Activated CD4-positive, alpha-beta T cell treated with anti-CD3 and anti-CD28 coated beads, Interleukin-2, amount 10 ng/mL, durations not matched to agents 24 days and 14 days (primary cell): ENCODE measurements at regions of chr18 and their contacts with region 1.

Region 1: GRCh38 chr18:9334329-9334972 is at the start of gene TWSG1:
- DNase-seq: peak; percentile 97
- H3K4me3 Mint-ChIP-seq: peak within 1 kb of the TSS; percentile 83
- H3K27ac Mint-ChIP-seq: peak within 1 kb of the TSS; percentile 74
- H3K4me1 Mint-ChIP-seq: peaks cover 25% of the 10 kb centered on the region
- H3K27me3 Mint-ChIP-seq: peaks cover 29% of the 10 kb centered on the region
- total RNA-seq, gene TWSG1: 9.9 and 10.1 TPM in 2 replicates

Region 2: DNA sequence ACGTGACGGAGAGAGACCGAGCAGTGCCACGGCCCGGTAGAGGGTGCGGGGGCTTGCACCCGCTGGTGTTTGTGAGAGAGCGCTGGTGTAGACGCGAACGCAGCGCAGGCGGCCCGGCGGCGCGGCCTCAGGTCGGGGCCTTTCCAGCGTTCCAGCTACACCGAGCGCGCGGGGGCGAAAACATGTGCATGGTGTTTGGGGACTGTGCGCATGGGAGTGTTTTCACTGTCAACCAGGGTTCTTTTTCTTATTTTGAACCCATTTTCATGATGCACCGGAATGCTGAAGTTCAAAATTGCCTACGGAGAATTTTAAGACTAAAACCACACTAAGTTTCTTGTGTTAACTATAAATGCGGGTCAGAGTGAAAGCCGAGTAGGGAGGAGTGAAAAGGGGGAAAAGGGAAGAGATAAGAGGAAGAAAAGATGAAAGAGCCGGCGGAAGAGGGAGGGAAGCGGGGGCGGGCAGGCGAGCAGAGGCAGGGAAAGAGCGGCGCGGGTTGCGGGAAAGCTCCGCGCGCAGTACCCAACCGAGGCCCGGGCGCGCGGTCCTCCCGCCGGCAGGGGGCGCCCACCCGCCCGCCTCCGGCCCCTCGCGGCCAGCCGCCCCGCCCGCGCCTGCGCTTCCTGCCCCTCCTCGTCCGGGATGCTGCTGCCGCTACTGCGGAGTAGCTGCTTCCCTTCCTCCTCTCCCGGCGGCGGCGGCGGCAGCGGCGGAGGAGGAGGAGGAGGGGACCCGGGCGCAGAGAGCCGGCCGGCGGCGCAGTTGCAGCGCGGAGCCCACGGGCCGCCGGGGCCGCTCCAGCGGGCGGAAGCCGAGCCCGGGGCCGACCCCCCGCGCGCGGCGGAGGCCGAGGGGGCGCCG is 725.4 kb before region 1 on chr18 and contains the start of gene RAB12:
- intact Hi-C with region 1: loop called (anchors 10 kb)
- DNase-seq: peak; percentile 96
- H3K4me3 Mint-ChIP-seq: peak within 1 kb of the TSS; percentile 93
- H3K27ac Mint-ChIP-seq: peak within 1 kb of the TSS; percentile 92
- H3K4me1 Mint-ChIP-seq: peaks cover 43% of the 10 kb centered on the region
- H3K27me3 Mint-ChIP-seq: peaks cover 17% of the 10 kb centered on the region
- total RNA-seq, gene RAB12: 19.2 and 20.2 TPM in 2 replicates

Region 3: DNA sequence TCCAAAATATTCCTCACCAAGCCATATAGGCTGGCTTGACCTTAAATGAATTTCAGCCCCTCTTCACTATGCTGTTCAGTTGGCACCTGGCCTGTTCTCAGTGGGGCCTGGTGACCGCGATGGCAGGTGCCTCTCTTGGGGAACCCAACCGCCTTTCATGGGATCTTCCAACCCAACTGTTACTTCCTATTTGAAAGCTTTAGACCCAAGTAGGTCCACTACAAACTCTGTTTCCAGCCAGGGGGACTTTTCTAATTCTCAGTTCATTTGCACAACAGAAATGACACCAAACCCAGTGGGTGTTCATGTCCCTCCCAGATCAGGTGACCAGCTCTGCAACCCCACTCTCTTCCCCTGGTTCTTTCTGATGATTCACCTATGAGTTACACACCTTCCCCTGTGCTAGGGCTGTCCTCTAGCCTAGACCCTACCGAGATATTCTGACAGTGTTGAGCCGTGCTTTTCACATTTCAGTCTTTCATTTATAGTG is 267.6 kb before region 1 on chr18:
- intact Hi-C with region 1: loop called (anchors 5 kb)
- DNase-seq: no peak
- H3K4me3 Mint-ChIP-seq: no peak overlapping the region
- H3K27ac Mint-ChIP-seq: peak overlapping the region; percentile 43
- H3K4me1 Mint-ChIP-seq: peaks cover 30% of the 10 kb centered on the region
- H3K27me3 Mint-ChIP-seq: no peaks in the 10 kb centered on the region

Region 4: DNA sequence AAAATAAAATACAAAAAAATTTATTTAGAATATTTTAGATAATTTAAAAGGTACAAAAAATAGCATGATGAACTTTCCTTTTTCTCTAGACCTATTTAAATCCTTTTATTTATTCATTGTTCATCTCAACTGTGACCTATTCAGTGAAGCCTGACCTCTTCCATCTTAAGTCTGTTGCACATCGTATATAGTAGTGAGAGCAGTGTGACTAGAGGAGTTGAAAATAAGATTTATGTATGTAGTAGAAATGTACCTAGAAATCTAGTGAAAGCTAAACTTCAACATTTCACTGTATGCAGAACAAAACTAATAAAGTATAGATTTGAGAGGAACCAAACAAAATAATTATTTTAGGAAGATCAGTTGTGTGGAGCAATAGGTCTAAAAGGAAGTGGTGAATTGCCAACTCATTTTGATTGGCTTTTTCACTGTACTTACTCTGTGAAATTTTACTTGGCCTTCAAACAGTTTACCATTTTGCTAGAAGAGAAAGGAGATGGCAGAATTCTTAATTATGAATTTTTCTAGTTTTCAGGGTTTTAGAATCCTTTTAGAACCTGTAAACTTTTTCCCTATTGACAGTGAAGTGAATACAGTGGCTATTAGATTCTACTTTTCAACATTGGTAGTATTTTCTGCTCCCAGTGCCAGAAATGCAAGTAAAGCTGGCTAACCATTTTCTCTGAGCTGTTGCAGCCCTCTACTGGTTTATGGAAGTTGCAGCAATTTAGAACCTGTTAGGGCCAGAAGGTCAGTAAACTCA is 186.8 kb before region 1 on chr18:
- intact Hi-C with region 1: loop called (anchors 2 kb)
- DNase-seq: peak; percentile 83
- H3K4me3 Mint-ChIP-seq: peak overlapping the region; percentile 66
- H3K27ac Mint-ChIP-seq: peak overlapping the region; percentile 78
- H3K4me1 Mint-ChIP-seq: peaks cover 50% of the 10 kb centered on the region
- H3K27me3 Mint-ChIP-seq: no peaks in the 10 kb centered on the region

Region 5: GRCh38 chr18:9474983-9475642 is 140.7 kb after region 1 on chr18 and contains the start of gene RALBP1:
- intact Hi-C with region 1: loop called (anchors 1 kb)
- DNase-seq: peak; percentile 100
- H3K4me3 Mint-ChIP-seq: peak within 1 kb of the TSS; percentile 83
- H3K27ac Mint-ChIP-seq: peak within 1 kb of the TSS; percentile 96
- H3K4me1 Mint-ChIP-seq: peaks cover 25% of the 10 kb centered on the region
- H3K27me3 Mint-ChIP-seq: peaks cover 12% of the 10 kb centered on the region
- total RNA-seq, gene RALBP1: 38.9 and 41.3 TPM in 2 replicates